CD8-positive, alpha-beta T cell (primary cell): ENCODE measurements at regions of chr6 and their contacts with region 1.

Region 1: DNA sequence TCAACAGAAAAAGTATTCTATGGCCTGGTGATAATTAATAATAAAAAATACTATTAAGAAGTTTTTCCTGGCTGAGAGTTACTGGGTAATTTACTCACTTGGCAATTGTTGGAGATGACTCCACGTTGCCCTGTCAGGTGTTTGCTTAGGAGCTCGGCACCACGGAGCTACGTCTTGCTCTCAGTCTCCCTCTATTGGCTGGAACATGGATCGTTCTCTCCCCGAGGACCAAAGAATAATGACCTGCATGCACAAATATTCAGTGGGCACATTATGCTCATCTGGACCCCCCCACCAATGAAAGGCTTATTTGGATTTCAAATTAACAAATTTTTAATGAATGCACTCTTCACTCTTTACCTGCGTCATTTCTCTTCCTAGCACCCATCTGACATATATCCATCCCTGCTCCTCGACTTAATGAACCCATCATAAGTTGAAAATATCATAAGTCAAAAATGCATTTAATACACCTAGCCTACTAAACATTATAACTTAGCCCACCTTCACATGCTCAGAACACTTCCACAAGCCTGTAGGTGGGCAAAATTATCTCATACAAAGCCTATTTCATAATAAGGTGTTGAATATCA is 71.0 kb upstream of the CD83 start:
- DNase-seq: peak in 7 of 9 experiments; percentile 9 to 68 (median 33)
- ATAC-seq: peak; percentile 83
- H3K4me3 ChIP-seq: no peak overlapping the region
- H3K4me3 Mint-ChIP-seq: no peak overlapping the region
- H3K27ac ChIP-seq: no peak overlapping the region
- H3K27ac Mint-ChIP-seq: no peak overlapping the region
- H3K4me1 ChIP-seq: no peaks in the 10 kb centered on the region
- H3K4me1 Mint-ChIP-seq: peaks cover 1% of the 10 kb centered on the region
- H3K27me3 ChIP-seq: no peaks in the 10 kb centered on the region
- H3K27me3 Mint-ChIP-seq: peaks cover 31% of the 10 kb centered on the region
- CTCF ChIP-seq: peak; percentile 60

Region 2: DNA sequence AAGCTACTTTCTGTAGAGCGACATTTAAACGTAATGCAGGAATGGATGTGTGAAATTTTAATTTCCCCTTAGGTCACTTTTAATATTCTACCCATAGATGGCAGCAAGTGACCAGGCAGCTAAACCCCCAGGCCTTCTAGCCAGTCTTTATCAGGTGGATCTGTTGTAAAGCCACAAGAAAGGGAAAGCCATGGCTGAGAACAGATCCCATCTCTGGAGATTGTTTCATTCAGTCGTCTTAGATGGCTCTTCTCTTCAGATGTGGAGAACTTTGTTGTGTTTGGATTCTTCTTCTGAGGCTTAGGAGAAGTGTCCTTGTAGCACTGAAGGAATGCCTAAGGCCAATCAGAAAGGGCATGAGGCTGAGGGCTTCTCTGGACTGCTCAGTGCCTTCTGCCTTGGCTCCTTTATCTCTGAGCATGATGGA is 137.6 kb before region 1 on chr6:
- CTCF ChIA-PET with region 1: interaction called, 4 read pairs
- POLR2A ChIA-PET with region 1: no interaction called
- intact Hi-C with region 1: loop called in 1 of 2 experiments (anchors 5 kb)
- DNase-seq: peak in 7 of 9 experiments; percentile 6 to 75 (median 32)
- ATAC-seq: peak; percentile 62
- H3K4me3 ChIP-seq: no peak overlapping the region
- H3K4me3 Mint-ChIP-seq: no peak overlapping the region
- H3K27ac ChIP-seq: no peak overlapping the region
- H3K27ac Mint-ChIP-seq: no peak overlapping the region
- H3K4me1 ChIP-seq: no peaks in the 10 kb centered on the region
- H3K4me1 Mint-ChIP-seq: no peaks in the 10 kb centered on the region
- H3K27me3 ChIP-seq: no peaks in the 10 kb centered on the region
- H3K27me3 Mint-ChIP-seq: peaks cover 24% of the 10 kb centered on the region
- CTCF ChIP-seq: peak; percentile 45

Region 3: DNA sequence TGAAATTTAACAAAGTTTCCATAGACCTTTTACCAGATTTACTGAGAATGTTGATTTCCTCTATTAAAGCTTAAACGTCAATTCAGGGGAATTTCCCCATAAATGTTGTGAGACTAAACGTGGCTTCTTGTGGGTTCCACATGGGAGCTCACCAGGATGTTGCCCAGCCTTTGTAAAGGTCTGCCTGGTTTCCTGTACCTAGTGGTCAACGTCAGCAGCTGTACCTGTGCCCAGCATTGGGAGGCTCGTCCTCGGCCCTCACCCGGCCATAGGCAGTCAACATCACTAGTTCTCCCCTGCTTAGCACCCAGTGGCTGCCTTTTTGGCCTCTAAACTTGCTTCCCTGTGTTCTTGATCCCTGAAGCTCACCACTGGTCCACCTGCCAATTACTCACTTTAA is 48.9 kb after region 1 on chr6:
- CTCF ChIA-PET with region 1: no interaction called
- POLR2A ChIA-PET with region 1: no interaction called
- intact Hi-C with region 1: no loop called
- DNase-seq: peak in 2 of 9 experiments; percentile 34 to 54
- ATAC-seq: peak; percentile 29
- H3K4me3 ChIP-seq: no peak overlapping the region
- H3K4me3 Mint-ChIP-seq: no peak overlapping the region
- H3K27ac ChIP-seq: no peak overlapping the region
- H3K27ac Mint-ChIP-seq: no peak overlapping the region
- H3K4me1 ChIP-seq: no peaks in the 10 kb centered on the region
- H3K4me1 Mint-ChIP-seq: peaks cover 5% of the 10 kb centered on the region
- H3K27me3 ChIP-seq: peaks cover 0 to 3% of the 10 kb centered on the region in 2 experiments
- H3K27me3 Mint-ChIP-seq: no peaks in the 10 kb centered on the region
- CTCF ChIP-seq: no peak